ENCODE measurements at regions of chr16 and their contacts with region 1.

Region 1: DNA sequence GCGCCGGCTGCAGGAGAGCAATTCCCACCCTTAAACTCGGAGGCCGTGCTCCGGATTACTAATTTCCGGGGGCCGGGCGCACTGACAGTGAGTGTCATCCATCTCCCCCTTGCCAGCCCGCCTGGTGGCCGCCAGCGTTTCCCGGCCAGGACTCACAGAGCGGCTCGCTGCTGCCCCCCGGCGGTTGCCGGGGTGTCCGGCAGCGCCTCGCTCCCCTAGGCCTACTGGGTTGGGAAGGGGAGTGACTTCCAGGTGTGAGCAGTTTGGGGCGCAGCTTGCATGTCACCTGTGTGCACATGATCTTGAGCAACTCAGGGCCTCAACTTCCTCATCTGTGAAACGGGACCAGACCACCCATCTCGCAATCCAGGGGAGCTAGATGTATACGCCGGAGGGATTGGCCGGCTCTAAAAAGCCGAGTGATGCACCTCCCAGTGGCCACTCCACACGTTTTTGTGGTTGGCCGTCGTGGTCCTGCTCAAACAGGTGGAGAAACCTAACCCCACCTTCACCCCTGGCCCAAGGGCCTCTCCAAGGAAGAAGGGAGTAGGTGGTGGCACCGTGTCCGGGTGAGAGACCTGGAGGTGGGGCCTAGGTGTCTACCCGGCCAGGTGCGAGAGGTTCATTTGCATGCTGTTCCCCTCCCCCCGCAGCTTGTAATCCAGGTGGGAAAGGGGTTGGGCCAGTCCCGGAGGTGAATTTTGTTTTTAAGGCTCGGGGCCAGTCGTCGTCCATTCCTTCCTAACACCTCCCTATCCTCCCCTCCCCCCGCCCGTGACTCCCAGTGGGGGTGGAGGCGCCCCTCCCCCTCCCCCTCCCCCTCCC is 2.4 kb upstream of the GSE1 start:
- DNase-seq: peak; percentile 68 to 93 (median 80)
- ATAC-seq: peak; percentile 85
- H3K4me3 ChIP-seq: peak overlapping the region; percentile 66
- H3K4me3 Mint-ChIP-seq: peak overlapping the region; percentile 73 to 86 (median 81)
- H3K27ac ChIP-seq: no peak overlapping the region
- H3K27ac Mint-ChIP-seq: peak overlapping the region in 5 of 9 donors; percentile 17 to 76 (median 76)
- H3K4me1 ChIP-seq: peaks cover 23 to 31% of the 10 kb centered on the region in 2 donors
- H3K4me1 Mint-ChIP-seq: peaks cover 16 to 55% (median 27%) of the 10 kb centered on the region in 7 donors
- H3K27me3 ChIP-seq: peaks cover 0 to 2% of the 10 kb centered on the region in 2 donors
- H3K27me3 Mint-ChIP-seq: peaks cover 0 to 14% (median 0%) of the 10 kb centered on the region in 5 donors

Region 2: DNA sequence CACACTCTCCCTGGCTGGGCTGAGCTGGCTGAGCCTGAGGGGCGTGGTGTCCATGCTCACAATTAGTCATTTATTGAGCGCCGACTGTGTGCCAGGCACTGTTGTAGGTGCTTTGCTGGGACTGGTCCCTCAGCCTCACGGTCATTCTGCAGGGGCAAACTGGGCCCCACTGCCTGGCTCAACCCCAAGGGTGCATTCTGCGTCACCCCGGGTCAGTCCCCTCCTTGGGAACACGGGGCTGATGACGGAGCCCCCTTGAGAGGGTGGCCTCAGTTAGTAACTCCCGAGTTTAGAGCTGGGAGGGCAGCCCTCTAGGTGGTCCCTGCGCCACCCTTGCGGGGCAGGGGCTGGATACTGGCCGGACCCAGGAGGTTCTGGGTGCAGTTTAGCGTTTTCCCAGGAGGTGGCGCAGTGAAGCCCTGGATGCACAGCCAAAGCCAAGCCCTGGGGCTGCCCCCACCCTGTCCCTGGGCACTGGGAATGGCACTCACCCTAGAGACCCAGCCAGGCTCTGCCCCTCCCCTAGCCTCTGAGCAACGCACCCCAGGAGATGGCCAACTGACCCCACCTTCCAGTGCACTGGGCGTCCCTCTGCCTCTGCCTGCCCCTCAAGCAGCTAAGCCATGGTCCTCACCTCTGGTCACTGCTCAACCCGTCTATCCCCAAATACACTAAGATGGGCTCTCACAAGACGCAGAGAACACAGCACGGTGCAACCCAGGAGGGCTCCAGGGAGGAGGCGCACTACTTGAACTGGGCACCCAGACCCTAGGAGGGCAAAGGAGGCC is 240.8 kb before region 1 on chr16:
- CTCF ChIA-PET with region 1: no interaction called
- POLR2A ChIA-PET with region 1: no interaction called
- intact Hi-C with region 1: loop called in 1 of 2 experiments (anchors 1 kb)
- DNase-seq: peak in 8 of 9 donors; percentile 15 to 54 (median 31)
- ATAC-seq: peak; percentile 49
- H3K4me3 ChIP-seq: no peak overlapping the region
- H3K4me3 Mint-ChIP-seq: no peak overlapping the region
- H3K27ac ChIP-seq: no peak overlapping the region
- H3K27ac Mint-ChIP-seq: no peak overlapping the region
- H3K4me1 ChIP-seq: no peaks in the 10 kb centered on the region
- H3K4me1 Mint-ChIP-seq: peaks cover 0 to 10% (median 2%) of the 10 kb centered on the region in 7 donors
- H3K27me3 ChIP-seq: no peaks in the 10 kb centered on the region
- H3K27me3 Mint-ChIP-seq: peaks cover 0 to 5% (median 0%) of the 10 kb centered on the region in 5 donors

Region 3: GRCh38 chr16:85420501-85421337 is 190.0 kb before region 1 on chr16:
- CTCF ChIA-PET with region 1: interaction called, 14 read pairs
- POLR2A ChIA-PET with region 1: interaction called, 4 read pairs
- intact Hi-C with region 1: loop called (anchors 1 kb)
- DNase-seq: peak; percentile 29 to 90 (median 71)
- ATAC-seq: peak; percentile 95
- H3K4me3 ChIP-seq: no peak overlapping the region
- H3K4me3 Mint-ChIP-seq: no peak overlapping the region
- H3K27ac ChIP-seq: no peak overlapping the region
- H3K27ac Mint-ChIP-seq: no peak overlapping the region
- H3K4me1 ChIP-seq: peaks cover 0 to 10% of the 10 kb centered on the region in 2 donors
- H3K4me1 Mint-ChIP-seq: peaks cover 0 to 10% (median 0%) of the 10 kb centered on the region in 7 donors
- H3K27me3 ChIP-seq: no peaks in the 10 kb centered on the region
- H3K27me3 Mint-ChIP-seq: peaks cover 0 to 4% (median 0%) of the 10 kb centered on the region in 5 donors

Region 4: DNA sequence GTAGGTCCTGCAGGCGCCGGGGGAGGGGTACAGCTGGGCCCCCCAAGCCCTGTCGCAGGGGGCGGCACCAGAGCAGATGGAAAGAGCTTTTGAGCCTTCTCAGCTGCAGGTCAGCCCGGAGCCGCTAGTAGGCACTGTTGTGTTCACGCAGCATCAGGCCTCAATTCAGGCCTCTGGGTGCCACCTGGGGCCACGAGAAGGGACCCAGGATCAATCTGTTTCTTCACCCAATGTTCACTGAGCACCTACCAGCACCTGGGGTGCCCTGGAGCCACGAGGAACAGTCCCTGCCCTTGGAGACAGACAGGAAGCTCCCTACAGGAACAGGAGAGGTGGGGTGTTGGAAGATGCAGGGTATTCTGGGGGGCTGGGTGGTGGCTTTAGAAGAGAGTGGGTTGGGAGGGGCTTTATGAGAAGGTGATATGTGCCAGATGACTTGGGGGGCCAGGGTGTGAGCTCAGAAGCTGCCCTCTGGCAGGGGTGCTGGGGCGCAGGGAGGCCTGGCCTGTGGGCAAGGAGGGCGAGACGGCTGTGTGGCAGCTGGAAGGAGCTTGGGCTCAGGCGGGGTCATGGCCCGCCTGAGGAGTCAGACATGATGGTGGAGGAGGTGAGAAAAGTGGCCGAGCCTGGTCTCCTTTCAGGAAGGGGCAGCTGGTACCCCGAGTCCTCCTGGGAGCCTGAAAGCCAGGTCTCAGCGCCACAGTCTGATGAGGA is 119.5 kb before region 1 on chr16:
- CTCF ChIA-PET with region 1: interaction called, 7 read pairs
- POLR2A ChIA-PET with region 1: no interaction called
- intact Hi-C with region 1: loop called (anchors 1 kb)
- DNase-seq: peak in 3 of 9 donors; percentile 17 to 28 (median 27)
- ATAC-seq: peak; percentile 69
- H3K4me3 ChIP-seq: no peak overlapping the region
- H3K4me3 Mint-ChIP-seq: peak overlapping the region in 1 of 10 donors; percentile 52
- H3K27ac ChIP-seq: no peak overlapping the region
- H3K27ac Mint-ChIP-seq: peak overlapping the region in 1 of 9 donors; percentile 46
- H3K4me1 ChIP-seq: no peaks in the 10 kb centered on the region
- H3K4me1 Mint-ChIP-seq: peaks cover 4 to 16% (median 8%) of the 10 kb centered on the region in 7 donors
- H3K27me3 ChIP-seq: no peaks in the 10 kb centered on the region
- H3K27me3 Mint-ChIP-seq: no peaks in the 10 kb centered on the region

Region 5: DNA sequence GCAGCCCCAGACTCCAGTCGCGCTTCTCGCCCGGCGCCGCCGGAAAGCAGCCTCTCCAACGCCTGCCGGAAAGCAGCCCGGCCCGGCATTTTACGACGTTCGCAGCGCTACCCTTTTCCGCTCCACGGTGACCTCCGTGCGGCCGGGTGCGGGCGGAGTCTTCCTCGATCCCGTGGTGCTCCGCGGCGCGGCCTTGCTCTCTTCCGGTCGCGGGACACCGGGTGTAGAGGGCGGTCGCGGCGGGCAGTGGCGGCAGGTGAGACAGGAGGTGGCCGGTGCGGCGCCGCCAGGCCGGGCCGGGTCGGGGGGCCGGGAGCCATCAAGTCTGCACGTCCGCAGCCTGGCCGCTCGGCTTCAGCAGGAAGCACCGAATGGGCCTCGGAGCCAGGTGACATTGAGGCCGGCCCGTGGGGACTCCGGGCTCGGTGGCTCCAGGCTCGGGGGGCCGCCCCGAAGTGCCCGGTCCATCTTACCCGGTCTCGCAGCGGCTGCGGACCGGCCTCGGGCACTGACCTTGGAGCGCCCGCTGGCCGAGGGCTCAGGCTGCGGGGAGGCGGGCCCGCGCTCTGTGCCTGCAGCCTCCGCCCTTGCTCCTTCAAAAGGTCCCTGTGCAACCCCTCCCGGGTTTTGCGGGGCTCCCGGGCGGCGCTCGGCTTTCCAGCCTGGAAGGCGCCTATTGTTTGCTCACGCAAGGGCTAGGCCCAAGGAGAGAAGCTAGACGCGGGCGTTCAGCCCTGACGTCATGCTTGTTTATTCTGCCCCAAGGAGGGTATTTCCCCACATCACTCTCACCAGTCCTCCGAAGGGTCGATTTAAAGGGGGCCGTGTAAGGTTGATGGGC is 189.0 kb after region 1 on chr16 and contains the starts of genes COX4I1 and EMC8:
- CTCF ChIA-PET with region 1: no interaction called
- POLR2A ChIA-PET with region 1: no interaction called
- intact Hi-C with region 1: loop called in 1 of 2 experiments (anchors 2 kb)
- DNase-seq: peak; percentile 86 to 95 (median 90)
- ATAC-seq: peak; percentile 92
- H3K4me3 ChIP-seq: peak within 1 kb of the TSS; percentile 81
- H3K4me3 Mint-ChIP-seq: peak within 1 kb of the TSS; percentile 86 to 94 (median 90)
- H3K27ac ChIP-seq: peak within 1 kb of the TSS; percentile 99
- H3K27ac Mint-ChIP-seq: peak within 1 kb of the TSS; percentile 90 to 98 (median 95)
- H3K4me1 ChIP-seq: peaks cover 18 to 26% of the 10 kb centered on the region in 2 donors
- H3K4me1 Mint-ChIP-seq: peaks cover 37 to 77% (median 68%) of the 10 kb centered on the region in 7 donors
- H3K27me3 ChIP-seq: no peaks in the 10 kb centered on the region
- H3K27me3 Mint-ChIP-seq: no peaks in the 10 kb centered on the region
- total RNA-seq, gene COX4I1: 479 to 692 (median 661) TPM
- total RNA-seq, gene EMC8: 22.4 to 31.8 (median 28.7) TPM

Measured in naive thymus-derived CD4-positive, alpha-beta T cell (primary cell).